ENCODE measurements at regions of chr17 and their contacts with region 1.

Region 1: DNA sequence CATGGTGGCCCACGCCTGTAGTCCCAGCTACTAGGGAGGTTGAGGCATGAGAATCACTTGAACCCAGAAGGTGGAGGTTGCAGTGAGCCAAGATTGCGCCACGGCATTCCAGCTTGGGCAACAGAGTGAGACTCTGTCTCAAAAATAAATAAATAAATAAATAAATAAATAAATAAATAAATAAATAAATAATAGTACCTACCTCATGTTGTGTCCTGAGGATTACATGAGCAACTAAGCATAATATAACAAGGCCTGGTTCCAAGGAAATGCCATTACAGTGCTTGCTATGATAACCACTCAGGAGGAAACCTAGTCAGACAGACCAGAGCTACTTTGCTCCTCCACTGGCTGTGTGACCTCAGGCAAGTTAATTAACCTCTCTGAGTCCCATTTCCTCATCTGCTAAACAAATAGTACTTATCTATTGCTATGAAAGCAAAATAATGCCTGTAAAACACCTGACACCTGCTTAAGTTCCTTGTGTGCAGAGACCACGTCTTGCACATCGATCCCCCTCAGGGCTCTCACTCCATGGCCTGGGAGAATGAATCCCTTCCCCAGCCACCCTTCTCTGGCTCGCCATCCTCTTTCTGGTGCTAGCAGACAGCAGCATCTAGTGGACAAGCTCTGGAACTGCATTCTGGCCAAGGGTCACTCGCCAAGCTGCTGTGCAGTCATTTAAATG is 7.5 kb downstream of the EPOP start:
- DNase-seq: peak; percentile 47
- H3K4me3 ChIP-seq: no peak overlapping the region
- H3K27ac ChIP-seq: no peak overlapping the region
- H3K4me1 ChIP-seq: no peaks in the 10 kb centered on the region
- H3K27me3 ChIP-seq: peaks cover 2% of the 10 kb centered on the region
- CTCF ChIP-seq: peak; percentile 100

Region 2: DNA sequence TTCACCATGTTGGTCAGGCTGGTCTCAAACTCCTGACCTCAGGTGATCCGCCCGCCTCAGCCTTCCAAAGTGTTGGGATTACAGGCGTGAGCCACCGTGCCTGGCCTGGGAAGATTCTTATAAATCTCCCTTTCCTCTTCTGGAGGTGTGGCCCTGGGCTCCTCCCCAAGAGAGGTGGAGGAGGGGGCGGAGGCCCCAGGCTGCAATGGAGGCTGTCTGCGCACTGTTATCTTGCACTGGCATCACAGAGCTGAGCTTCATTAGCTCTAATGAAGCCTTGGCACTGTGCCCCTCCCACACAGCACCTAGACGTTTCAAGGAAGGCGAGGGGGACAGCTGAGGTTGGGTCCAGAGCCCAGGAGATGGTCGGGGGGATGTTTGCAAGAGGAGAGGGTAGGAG is 231.4 kb before region 1 on chr17:
- CTCF ChIA-PET with region 1: no interaction called
- dilution Hi-C with region 1: loop called (anchors 5 kb)
- in situ Hi-C with region 1: loop called (anchors 10 to 25 kb)
- intact Hi-C with region 1: no loop called
- DNase-seq: no peak
- H3K4me3 ChIP-seq: no peak overlapping the region
- H3K27ac ChIP-seq: no peak overlapping the region
- H3K4me1 ChIP-seq: no peaks in the 10 kb centered on the region
- H3K27me3 ChIP-seq: no peaks in the 10 kb centered on the region
- CTCF ChIP-seq: no peak

Region 3: GRCh38 chr17:38485146-38485468 is 182.1 kb before region 1 on chr17:
- CTCF ChIA-PET with region 1: interaction called, 5 read pairs
- dilution Hi-C with region 1: loop called (anchors 10 kb)
- in situ Hi-C with region 1: loop called (anchors 5 kb)
- intact Hi-C with region 1: no loop called
- DNase-seq: no peak
- H3K4me3 ChIP-seq: no peak overlapping the region
- H3K27ac ChIP-seq: no peak overlapping the region
- H3K4me1 ChIP-seq: peaks cover 7% of the 10 kb centered on the region
- H3K27me3 ChIP-seq: no peaks in the 10 kb centered on the region
- CTCF ChIP-seq: no peak

Region 4: DNA sequence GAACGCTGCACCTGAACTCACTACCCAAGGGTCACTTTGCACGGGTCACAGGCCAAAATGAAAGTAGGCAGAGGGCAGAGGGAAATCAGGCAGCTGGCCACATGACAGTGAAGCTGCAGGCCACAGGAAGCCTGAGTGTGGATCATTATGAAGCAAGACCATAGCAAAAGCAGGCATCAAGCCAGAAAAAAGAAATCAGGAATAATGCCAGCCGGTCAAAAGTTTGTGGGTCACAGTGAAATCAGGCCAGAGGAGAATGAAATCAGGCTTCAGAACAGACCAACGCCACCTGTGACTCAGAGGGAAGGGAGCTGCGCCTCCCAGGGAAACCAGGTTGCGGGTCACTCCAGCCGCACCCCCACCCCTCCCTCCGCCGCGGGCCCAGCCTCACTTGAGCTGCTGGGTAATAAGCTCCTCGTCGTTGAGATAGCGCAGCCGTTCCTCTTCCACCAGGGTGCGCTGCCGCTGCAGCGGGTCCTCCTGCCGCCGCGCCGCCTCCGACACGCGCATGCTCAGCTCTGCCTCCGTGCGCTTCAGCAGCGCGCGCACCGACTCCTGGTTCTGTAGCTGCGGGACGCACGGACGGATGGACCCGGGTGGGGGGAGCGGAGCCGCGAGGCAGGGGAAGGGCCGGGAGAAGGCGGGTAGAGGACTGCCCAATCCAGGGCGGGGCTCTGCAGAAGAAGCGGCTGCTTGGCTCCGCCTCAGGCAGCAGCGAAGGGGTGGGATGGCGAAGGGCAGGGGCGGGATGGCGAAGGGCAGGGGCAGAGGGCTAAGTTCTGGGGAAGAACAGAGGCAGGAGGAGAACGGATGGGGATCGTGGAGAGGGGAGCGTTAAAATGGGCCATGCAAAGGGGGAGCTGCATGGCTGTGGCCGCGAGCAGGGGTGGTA is 109.2 kb before region 1 on chr17:
- CTCF ChIA-PET with region 1: interaction called, 25 read pairs
- dilution Hi-C with region 1: no loop called
- in situ Hi-C with region 1: no loop called
- intact Hi-C with region 1: loop called (anchors 1 kb)
- DNase-seq: peak; percentile 95
- H3K4me3 ChIP-seq: peak overlapping the region; percentile 41 to 53 (median 48)
- H3K27ac ChIP-seq: peak overlapping the region; percentile 8
- H3K4me1 ChIP-seq: peaks cover 58% of the 10 kb centered on the region
- H3K27me3 ChIP-seq: no peaks in the 10 kb centered on the region
- CTCF ChIP-seq: peak; percentile 87 to 98

Region 5: GRCh38 chr17:38591759-38592241 is 75.4 kb before region 1 on chr17:
- CTCF ChIA-PET with region 1: no interaction called
- dilution Hi-C with region 1: loop called (anchors 5 kb)
- in situ Hi-C with region 1: no loop called
- intact Hi-C with region 1: no loop called
- DNase-seq: peak; percentile 80
- H3K4me3 ChIP-seq: no peak overlapping the region
- H3K27ac ChIP-seq: no peak overlapping the region
- H3K4me1 ChIP-seq: peaks cover 19% of the 10 kb centered on the region
- H3K27me3 ChIP-seq: peaks cover 10% of the 10 kb centered on the region
- CTCF ChIP-seq: no peak